ENCODE measurements at regions of chr17 and their contacts with region 1.

Region 1: GRCh38 chr17:76557368-76558197 is 17.7 kb downstream of the PRCD start:
- DNase-seq: peak; percentile 97
- H3K4me3 Mint-ChIP-seq: peak overlapping the region; percentile 94
- H3K27ac Mint-ChIP-seq: peak overlapping the region; percentile 97
- H3K4me1 Mint-ChIP-seq: peaks cover 54% of the 10 kb centered on the region
- H3K27me3 Mint-ChIP-seq: no peaks in the 10 kb centered on the region

Region 2: GRCh38 chr17:76506408-76507349 is 50.9 kb before region 1 on chr17:
- CTCF ChIA-PET with region 1: no interaction called
- DNase-seq: peak; percentile 90
- H3K4me3 Mint-ChIP-seq: no peak overlapping the region
- H3K27ac Mint-ChIP-seq: peak overlapping the region; percentile 42
- H3K4me1 Mint-ChIP-seq: peaks cover 50% of the 10 kb centered on the region
- H3K27me3 Mint-ChIP-seq: peaks cover 36% of the 10 kb centered on the region

Region 3: GRCh38 chr17:76523084-76524037 is 34.2 kb before region 1 on chr17:
- CTCF ChIA-PET with region 1: interaction called, 18 read pairs
- DNase-seq: peak; percentile 86
- H3K4me3 Mint-ChIP-seq: no peak overlapping the region
- H3K27ac Mint-ChIP-seq: no peak overlapping the region
- H3K4me1 Mint-ChIP-seq: peaks cover 27% of the 10 kb centered on the region
- H3K27me3 Mint-ChIP-seq: peaks cover 63% of the 10 kb centered on the region

Region 4: GRCh38 chr17:76547184-76547641 is 10.4 kb before region 1 on chr17:
- CTCF ChIA-PET with region 1: interaction called, 18 read pairs
- DNase-seq: peak; percentile 76
- H3K4me3 Mint-ChIP-seq: no peak overlapping the region
- H3K27ac Mint-ChIP-seq: no peak overlapping the region
- H3K4me1 Mint-ChIP-seq: peaks cover 8% of the 10 kb centered on the region
- H3K27me3 Mint-ChIP-seq: peaks cover 36% of the 10 kb centered on the region

Region 5: GRCh38 chr17:76567634-76568432 is 10.2 kb after region 1 on chr17:
- CTCF ChIA-PET with region 1: interaction called, 15 read pairs
- DNase-seq: no peak
- H3K4me3 Mint-ChIP-seq: no peak overlapping the region
- H3K27ac Mint-ChIP-seq: no peak overlapping the region
- H3K4me1 Mint-ChIP-seq: peaks cover 13% of the 10 kb centered on the region
- H3K27me3 Mint-ChIP-seq: peaks cover 5% of the 10 kb centered on the region

Region 6: DNA sequence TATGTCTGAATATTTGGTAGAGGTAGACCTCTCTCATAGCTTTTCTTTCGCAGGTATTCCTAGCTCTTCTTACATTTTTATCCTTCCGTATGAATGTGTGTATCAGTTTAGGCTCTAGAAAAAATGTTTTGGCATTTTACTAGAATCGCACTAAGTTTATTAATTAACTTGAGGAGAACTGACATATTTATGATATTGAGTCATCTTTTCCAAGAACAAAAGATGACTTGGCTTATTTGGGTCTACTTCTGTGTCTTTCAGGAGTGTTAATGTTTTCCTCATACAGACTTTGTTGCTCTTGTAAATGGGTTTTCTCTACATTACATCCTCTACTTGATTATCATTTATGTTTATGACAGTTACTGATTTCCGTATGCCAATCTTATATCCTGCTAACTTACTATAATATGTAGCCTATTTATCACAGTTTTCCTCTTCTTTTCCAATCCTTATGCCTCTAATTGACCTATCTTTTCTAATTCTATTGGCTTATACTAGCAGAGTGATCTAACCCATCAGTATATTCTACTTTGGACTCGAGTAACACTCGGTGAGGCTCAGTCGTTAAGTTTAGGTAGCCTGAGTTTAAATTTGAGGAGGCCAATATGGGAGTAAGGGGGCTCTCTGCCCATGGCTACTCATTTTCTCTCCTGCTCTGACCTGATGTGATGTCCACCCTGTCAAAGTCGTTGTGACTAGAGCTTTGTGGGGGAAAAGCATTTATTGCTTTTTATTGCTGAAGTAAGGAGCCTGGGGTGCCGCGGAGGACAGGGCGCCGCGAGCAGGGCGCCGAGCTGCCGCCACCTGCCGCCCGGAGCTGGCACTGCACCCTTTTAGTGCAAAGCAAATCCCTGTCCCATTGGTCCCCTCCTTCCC is 65.9 kb after region 1 on chr17:
- CTCF ChIA-PET with region 1: interaction called, 61 read pairs
- DNase-seq: peak; percentile 82
- H3K4me3 Mint-ChIP-seq: no peak overlapping the region
- H3K27ac Mint-ChIP-seq: no peak overlapping the region
- H3K4me1 Mint-ChIP-seq: no peaks in the 10 kb centered on the region
- H3K27me3 Mint-ChIP-seq: peaks cover 34% of the 10 kb centered on the region

Region 7: GRCh38 chr17:76681222-76682137 is 123.9 kb after region 1 on chr17:
- CTCF ChIA-PET with region 1: interaction called, 35 read pairs
- DNase-seq: peak; percentile 87
- H3K4me3 Mint-ChIP-seq: no peak overlapping the region
- H3K27ac Mint-ChIP-seq: no peak overlapping the region
- H3K4me1 Mint-ChIP-seq: peaks cover 7% of the 10 kb centered on the region
- H3K27me3 Mint-ChIP-seq: peaks cover 41% of the 10 kb centered on the region

Region 8: DNA sequence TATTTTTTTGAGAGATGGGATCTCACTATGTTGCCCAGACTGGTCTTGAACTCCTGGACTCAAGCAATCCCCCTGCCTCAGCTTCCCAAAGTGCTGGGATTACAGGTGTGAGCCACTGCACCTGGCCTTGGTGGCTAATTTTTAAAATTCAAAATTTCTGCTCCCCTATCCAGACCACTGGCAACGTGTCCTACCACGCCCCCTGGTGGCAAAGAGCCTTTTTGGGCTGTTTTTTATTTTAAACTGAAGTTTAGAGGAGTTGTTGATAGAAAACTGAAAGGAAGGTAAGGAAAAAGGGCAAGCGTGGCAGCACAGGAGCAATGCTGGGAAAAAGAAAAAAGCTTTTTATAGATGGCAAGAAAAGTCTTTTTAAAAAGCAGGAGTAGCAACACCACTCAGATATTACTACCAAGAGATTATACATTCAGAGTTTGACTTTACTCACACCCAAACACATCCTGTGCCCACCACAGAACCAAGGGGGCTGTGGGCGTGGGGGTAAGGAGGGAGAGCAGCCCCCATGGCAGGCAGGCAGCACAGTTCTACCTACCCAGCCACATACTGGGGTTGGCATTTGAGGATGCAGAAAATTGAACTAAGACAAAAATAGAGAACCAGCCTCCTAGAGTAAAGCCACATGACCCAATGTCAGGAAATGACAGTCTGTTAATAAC is 157.4 kb after region 1 on chr17:
- CTCF ChIA-PET with region 1: interaction called, 11 read pairs
- DNase-seq: peak; percentile 87
- H3K4me3 Mint-ChIP-seq: no peak overlapping the region
- H3K27ac Mint-ChIP-seq: peak overlapping the region; percentile 86
- H3K4me1 Mint-ChIP-seq: peaks cover 49% of the 10 kb centered on the region
- H3K27me3 Mint-ChIP-seq: peaks cover 8% of the 10 kb centered on the region